Activated naive CD4-positive, alpha-beta T cell treated with anti-CD3 and anti-CD28 coated beads, Interleukin-2, amount 10 ng/mL, durations not matched to agents 7 days and 5 days (primary cell): ENCODE measurements at regions of chr20 and their contacts with region 1.

Region 1: DNA sequence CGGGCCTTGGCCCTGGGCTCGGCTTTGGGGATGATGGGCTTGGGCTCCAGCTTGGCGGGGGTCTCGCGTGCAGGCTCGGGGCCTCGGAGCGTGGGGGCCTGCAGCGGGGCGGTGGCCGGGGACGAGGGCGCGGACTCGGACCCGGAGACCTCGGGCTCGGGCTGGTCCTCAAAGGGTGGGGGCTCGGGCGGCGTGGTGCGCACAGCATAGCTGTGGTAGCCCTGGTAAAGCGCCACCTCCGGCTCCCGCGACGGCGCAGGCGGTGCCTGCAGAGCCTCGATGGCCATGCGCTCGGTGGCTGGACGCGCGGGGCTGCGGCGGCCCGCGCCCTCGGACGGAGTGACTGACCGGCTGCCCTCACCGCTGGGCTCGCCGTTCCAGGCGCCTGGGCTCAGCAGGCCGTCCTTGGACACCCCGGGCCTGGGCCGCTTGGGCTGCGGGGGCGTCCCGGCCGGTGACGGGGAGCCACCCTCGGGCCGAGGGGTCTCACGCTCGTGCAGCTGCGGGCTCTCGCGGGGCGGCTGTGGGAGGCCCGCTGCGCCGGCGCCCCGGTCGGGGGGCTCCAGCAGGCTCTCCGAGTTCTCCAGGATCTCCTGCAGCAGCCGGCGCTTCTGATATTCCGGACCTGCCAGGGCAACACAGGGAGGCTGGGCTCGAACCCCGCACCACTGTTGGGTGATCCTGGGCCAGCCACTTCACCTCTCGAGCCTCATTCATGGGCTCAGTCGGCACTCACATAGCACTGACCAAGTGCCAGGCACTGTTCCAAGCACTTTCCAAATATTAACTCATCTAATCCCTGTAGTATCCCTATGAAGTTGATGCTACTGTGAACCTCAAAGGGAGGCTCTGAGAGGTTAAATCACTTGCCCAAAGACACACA is 71.0 kb downstream of the JPH2 start:
- DNase-seq: no peak
- H3K4me3 Mint-ChIP-seq: no peak overlapping the region
- H3K27ac Mint-ChIP-seq: no peak overlapping the region
- H3K4me1 Mint-ChIP-seq: peaks cover 6% of the 10 kb centered on the region
- H3K27me3 Mint-ChIP-seq: peaks cover 57% of the 10 kb centered on the region

Region 2: GRCh38 chr20:43955062-43955749 is 160.8 kb before region 1 on chr20:
- CTCF ChIA-PET with region 1: no interaction called
- DNase-seq: peak; percentile 49
- H3K4me3 Mint-ChIP-seq: no peak overlapping the region
- H3K27ac Mint-ChIP-seq: no peak overlapping the region
- H3K4me1 Mint-ChIP-seq: peaks cover 81% of the 10 kb centered on the region
- H3K27me3 Mint-ChIP-seq: peaks cover 48% of the 10 kb centered on the region

Region 3: DNA sequence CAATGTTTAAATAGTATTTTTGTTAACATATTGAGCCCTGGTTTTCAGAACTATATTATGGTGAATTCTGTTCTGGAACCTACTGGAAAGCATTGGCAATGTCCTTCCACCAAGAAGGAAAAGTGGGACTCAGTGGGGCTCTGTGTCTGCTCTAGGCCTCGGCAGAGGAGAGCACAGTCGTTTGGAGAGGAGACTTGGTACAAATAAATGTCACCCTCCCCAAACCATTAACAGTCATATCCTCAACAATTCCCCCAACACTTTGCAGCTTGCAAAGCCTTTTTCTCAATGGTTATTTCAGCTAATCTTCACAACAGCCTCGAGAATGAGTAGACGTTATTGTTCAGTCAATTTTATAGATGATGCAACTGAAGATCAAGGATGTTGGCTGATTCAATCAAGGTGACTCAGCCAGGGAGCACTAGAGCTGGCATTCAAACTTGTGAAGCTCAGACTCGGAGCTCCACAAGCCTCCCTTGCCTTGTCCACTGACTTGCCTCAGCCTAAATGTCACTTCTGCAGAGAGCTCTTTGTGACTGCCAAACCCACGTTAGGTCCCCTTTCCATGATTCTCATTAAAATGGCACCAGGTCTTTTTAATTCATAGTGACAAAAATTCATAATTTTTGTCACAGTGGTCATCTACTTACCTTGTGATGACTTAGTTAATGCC is 140.8 kb before region 1 on chr20:
- CTCF ChIA-PET with region 1: no interaction called
- DNase-seq: no peak
- H3K4me3 Mint-ChIP-seq: no peak overlapping the region
- H3K27ac Mint-ChIP-seq: no peak overlapping the region
- H3K4me1 Mint-ChIP-seq: no peaks in the 10 kb centered on the region
- H3K27me3 Mint-ChIP-seq: peaks cover 48% of the 10 kb centered on the region

Region 4: GRCh38 chr20:44028868-44029847 is 86.8 kb before region 1 on chr20:
- CTCF ChIA-PET with region 1: no interaction called
- DNase-seq: peak; percentile 64
- H3K4me3 Mint-ChIP-seq: peak overlapping the region; percentile 35
- H3K27ac Mint-ChIP-seq: peak overlapping the region; percentile 82
- H3K4me1 Mint-ChIP-seq: peaks cover 59% of the 10 kb centered on the region
- H3K27me3 Mint-ChIP-seq: peaks cover 65% of the 10 kb centered on the region

Region 5: DNA sequence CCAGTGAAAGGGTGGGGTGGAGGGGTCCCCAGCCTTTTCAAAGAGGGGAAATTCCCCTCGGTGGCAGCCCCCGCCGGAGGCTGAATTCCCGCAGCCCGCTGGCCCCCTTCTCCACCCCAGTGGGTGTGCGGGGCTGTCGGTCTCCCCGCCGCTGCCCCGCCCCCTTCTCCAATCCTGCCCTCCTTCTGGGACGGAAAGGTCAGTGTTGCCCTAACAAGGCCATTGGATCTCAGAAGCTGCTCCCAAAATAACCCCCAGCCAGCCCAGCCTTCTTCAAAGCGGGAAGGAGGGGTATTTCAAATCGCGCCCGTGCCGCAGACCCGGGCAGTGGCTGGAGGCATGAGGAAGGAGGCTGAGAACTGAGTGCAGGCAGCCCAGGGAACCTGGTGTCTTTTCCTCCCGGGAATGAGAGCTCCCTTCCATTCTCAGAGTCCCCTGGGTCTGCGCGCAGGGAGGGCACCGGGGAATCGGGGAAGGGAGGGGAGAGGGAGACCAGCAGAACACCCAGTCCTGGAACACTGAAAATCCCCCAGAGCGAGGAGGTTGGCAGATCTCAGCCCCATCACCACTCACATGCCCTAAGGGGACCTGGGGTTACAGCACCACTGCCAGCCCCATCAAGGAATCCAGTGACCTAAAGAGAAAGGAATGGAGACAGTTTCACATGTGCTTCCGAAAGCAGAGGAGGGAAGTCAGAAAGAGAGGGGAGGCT is 71.2 kb after region 1 on chr20 and contains the start of gene JPH2:
- CTCF ChIA-PET with region 1: interaction called, 114 read pairs
- DNase-seq: no peak
- H3K4me3 Mint-ChIP-seq: no peak within 1 kb of the TSS
- H3K27ac Mint-ChIP-seq: no peak within 1 kb of the TSS
- H3K4me1 Mint-ChIP-seq: peaks cover 4% of the 10 kb centered on the region
- H3K27me3 Mint-ChIP-seq: peaks cover 67% of the 10 kb centered on the region

Region 6: GRCh38 chr20:44196271-44196670 is 80.3 kb after region 1 on chr20:
- CTCF ChIA-PET with region 1: interaction called, 114 read pairs
- DNase-seq: no peak
- H3K4me3 Mint-ChIP-seq: no peak overlapping the region
- H3K27ac Mint-ChIP-seq: no peak overlapping the region
- H3K4me1 Mint-ChIP-seq: peaks cover 32% of the 10 kb centered on the region
- H3K27me3 Mint-ChIP-seq: peaks cover 4% of the 10 kb centered on the region